KBM-7 (cell line): ENCODE measurements at regions of chr9 and their contacts with region 1.

Region 1: GRCh38 chr9:13427587-13427986 is 148.1 kb upstream of the MPDZ start:
- DNase-seq: peak; percentile 50

Region 2: GRCh38 chr9:13296972-13297371 is 130.6 kb before region 1 on chr9:
- in situ Hi-C with region 1: no loop called
- DNase-seq: no peak

Region 3: DNA sequence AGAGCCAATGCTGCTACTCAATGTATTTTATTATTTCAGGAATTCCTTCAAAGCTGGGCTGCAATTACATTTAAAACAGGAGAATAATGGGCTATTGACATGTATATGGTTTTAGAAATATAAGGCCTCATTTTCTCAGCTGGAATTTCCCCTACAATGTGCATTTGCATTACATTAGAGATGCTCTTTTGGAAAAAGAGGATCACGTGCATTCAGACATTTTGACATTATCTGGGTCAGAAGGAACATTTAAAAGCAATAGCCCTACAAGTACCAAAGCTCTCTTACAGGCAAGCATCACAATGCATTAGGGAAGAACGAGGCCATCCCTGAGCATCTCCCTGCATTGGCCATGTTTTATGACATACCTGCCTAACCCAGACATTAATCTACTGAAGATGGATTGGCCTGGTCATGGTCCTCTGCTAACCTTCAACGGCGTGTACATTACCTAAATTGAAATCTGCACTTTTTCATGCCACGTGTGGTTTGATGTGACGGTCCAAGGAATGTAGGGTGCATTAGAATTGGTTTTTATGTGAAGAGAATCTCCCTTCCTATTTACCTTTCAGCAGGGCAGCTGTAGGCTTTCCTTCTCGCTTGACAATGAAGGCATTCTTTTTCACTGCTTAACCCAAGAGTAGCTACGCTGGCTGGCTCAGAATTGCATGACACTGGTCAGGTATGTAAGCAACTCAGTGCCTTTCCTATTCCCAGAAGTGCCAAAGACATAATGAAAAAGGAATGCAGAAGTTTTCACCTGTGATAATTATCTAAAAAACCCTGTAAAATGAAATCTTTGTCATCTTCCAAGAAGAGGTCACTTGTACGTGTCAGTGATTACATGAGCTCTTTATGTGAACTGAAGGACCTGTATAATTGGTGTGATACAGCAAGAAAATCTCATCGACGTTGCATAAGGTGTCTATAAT is 64.2 kb after region 1 on chr9:
- in situ Hi-C with region 1: no loop called
- DNase-seq: no peak

Region 4: DNA sequence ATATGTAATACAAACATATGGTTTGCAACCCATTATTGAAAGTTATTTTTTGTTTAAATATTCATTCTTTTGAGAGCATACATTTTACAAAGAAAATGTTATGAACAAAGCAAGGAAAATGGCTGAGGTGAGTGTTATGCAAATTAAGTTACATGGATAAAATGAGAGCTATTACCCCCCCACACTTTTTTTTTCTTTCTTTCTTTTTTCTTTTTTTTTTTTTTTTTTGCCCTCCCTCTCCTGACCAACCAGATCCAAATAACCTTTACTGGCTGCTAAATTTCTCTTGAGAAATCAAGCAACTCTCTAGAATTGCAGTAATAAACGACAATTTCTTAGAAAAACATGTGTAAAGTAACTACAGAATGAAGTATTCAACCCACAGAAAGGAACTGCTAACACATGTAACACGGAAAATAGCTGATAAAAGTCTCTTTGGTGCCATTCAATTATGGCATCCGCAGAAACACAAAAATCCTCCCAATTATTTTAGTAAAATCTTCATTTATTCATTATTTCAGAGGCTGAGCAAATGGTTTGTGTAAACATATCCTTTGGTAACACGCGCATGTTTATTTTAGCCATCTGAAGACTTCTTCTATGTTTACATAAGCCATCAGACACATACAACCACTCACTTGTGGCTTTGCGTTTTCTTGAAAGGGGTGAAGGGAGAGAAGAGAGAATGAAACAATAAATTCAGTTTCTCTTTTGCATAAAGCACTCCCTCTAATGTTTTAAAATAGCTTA is 670.3 kb after region 1 on chr9:
- in situ Hi-C with region 1: no loop called
- DNase-seq: no peak

Region 5: DNA sequence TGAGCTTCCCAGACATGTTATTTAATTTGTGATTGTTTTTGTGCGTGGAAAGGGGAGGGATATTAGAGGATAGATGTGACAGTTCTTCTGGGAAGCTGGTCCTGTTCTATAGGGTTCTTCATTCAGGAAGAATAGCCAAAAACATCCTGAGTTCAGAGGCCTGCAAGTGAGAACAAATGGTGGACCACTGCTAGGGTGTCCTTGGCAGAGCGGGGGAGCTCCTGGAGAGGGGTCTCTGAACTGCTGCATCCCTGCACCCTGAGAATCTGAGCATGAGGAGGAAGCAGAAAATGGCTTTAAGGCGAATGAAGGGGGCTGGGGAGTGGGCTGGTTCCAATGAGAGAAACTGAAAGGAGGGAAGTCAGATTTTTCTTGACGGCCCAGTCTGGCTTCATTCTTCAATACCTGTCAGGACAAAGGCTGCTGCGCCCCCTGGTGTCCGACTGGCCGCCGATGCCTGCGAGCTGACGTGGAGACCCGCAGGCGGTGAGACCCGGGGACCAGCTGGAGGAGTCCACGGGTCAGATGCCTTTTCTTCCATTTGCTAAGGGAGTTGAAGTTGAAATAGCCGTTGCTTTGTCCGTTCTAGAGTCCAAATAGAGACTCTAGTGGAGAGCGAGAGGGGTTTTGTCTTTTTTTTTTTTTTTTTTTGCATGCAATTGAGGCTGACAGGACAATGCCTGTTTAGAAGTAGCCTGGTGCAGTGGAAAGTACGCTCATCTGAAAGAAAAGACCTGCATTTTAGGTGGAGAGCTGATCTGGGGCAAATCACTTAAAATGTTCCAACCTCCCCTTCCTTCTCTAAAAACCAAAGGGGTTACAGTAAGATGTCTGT is 925.9 kb after region 1 on chr9:
- in situ Hi-C with region 1: loop called (anchors 25 kb)
- DNase-seq: peak; percentile 77